GM12878 (cell line): ENCODE measurements at regions of chr13 and their contacts with region 1.

Region 1: DNA sequence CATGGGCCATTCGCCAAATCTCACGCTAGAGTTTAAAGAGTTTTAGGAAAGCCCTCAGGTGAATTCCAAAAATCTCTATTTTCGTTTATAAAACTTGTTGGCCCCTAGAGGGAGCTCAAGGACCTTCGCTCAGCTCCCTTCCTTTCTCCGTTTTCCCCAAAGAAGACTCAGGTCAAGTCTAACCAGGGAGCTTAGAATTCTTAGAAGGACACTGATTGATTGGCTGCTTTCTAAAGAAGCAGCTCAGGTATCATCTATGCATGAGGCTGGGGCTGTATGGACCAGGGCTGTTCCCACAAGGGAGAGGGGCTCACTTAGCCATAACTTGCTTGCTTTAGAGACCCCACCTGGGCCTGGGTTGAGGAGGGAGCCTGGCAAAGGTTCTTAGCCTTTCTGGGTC is 20.5 kb downstream of the DZIP1 start:
- DNase-seq: no peak
- ATAC-seq: peak; percentile 77
- H3K4me3 ChIP-seq: no peak overlapping the region
- H3K27ac ChIP-seq: no peak overlapping the region
- H3K4me1 ChIP-seq: no peaks in the 10 kb centered on the region
- H3K27me3 ChIP-seq: no peaks in the 10 kb centered on the region
- CTCF ChIP-seq: peak; percentile 66 to 79 (median 68)
- EP300 ChIP-seq: no peak
- POLR2A ChIP-seq: no peak
- RAD21 ChIP-seq: peak; percentile 90

Region 2: DNA sequence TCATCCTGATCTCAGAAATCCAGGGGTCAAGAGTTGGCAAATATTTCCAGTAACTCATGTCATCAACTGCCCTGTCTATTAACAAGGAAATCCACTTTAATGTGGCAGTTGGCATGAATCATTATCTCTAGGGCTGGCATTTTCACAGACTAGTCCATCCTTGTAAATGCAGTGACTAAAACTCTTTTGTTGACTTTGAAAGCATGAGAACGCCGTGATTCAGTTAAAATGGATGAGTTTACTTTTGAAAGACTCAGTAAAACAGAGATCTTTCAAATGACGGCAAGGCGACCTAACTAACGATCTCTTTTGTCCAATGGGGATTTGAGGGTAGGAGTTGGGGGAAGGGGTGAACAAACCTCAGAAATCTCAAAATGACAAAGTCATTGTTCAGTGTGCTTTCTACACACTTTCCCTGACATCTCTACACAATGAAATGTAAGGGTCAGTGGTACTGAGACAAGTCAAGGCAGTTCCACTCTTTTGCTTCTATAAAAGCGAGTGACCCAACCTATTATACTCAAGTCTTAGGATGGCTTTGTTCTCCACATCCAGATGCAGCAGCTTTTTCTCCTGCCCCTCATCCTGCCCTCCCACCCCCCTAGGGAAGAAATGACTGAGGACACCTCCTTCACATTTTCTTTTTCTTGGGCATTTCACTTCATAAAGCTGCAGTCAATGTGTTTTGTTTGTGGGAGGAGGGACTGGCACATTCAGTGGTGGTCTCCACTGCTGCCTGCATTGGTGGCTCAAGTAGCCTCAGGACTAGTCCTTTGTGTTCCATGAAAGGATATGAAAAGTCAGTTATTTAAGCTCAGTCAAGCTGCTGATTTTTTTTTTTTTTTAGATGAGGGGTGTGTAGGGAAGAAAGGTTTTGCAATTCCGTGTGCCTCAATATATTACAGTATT is 523.2 kb before region 1 on chr13:
- CTCF ChIA-PET with region 1: no interaction called
- POLR2A ChIA-PET with region 1: no interaction called
- RAD21 ChIA-PET with region 1: no interaction called
- SMC1A ChIA-PET with region 1: no interaction called
- in situ Hi-C with region 1: no loop called
- intact Hi-C with region 1: no loop called
- DNase-seq: peak; percentile 21
- ATAC-seq: peak; percentile 92
- H3K4me3 ChIP-seq: no peak overlapping the region
- H3K27ac ChIP-seq: no peak overlapping the region
- H3K4me1 ChIP-seq: no peaks in the 10 kb centered on the region
- H3K27me3 ChIP-seq: no peaks in the 10 kb centered on the region
- CTCF ChIP-seq: no peak
- EP300 ChIP-seq: peak; percentile 47 to 60; a peak in 2 of 4 replicates
- POLR2A ChIP-seq: no peak
- RAD21 ChIP-seq: no peak

Region 3: DNA sequence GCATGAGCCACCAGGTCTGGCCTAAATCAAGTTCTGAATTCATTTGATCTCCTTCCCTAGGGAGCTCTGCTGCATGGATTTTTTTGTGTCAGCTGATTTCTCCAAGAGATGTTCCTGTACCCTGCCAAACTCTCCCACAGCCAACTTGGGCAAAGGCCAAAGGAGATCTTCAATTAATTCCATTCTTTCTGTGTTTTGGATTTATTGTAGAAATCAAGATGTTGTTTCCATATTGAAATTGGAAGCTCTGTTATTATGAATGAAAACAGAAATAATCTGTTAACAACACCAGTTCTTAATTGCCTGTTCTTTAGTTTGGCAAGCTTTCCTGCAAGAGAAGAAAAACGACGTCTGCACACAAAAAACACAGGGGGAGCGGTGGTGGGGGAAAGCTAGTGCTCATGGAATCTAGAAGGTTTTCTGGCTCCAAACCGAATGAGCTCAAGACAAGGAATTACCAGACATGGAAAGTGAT is 236.2 kb before region 1 on chr13:
- CTCF ChIA-PET with region 1: no interaction called
- POLR2A ChIA-PET with region 1: no interaction called
- RAD21 ChIA-PET with region 1: no interaction called
- SMC1A ChIA-PET with region 1: no interaction called
- in situ Hi-C with region 1: no loop called
- intact Hi-C with region 1: no loop called
- DNase-seq: no peak
- ATAC-seq: no peak
- H3K4me3 ChIP-seq: peak overlapping the region; percentile 29; the same call in 1 of the 2 replicates
- H3K27ac ChIP-seq: peak overlapping the region; percentile 56
- H3K4me1 ChIP-seq: peaks cover 28% of the 10 kb centered on the region
- H3K27me3 ChIP-seq: no peaks in the 10 kb centered on the region
- CTCF ChIP-seq: no peak
- EP300 ChIP-seq: no peak
- POLR2A ChIP-seq: no peak
- RAD21 ChIP-seq: no peak

Region 4: GRCh38 chr13:95536632-95537241 is 87.3 kb before region 1 on chr13:
- CTCF ChIA-PET with region 1: interaction called, 12 read pairs
- POLR2A ChIA-PET with region 1: no interaction called
- RAD21 ChIA-PET with region 1: interaction called, 5 read pairs
- SMC1A ChIA-PET with region 1: interaction called, 9 read pairs
- in situ Hi-C with region 1: no loop called
- intact Hi-C with region 1: no loop called
- DNase-seq: no peak
- ATAC-seq: peak; percentile 34; the same call in 2 of the 3 replicates
- H3K4me3 ChIP-seq: no peak overlapping the region
- H3K27ac ChIP-seq: no peak overlapping the region
- H3K4me1 ChIP-seq: no peaks in the 10 kb centered on the region
- H3K27me3 ChIP-seq: no peaks in the 10 kb centered on the region
- CTCF ChIP-seq: peak; percentile 34 to 50 (median 47); a peak in 5 of 6 replicates
- EP300 ChIP-seq: no peak
- POLR2A ChIP-seq: no peak
- RAD21 ChIP-seq: peak; percentile 51

Region 5: DNA sequence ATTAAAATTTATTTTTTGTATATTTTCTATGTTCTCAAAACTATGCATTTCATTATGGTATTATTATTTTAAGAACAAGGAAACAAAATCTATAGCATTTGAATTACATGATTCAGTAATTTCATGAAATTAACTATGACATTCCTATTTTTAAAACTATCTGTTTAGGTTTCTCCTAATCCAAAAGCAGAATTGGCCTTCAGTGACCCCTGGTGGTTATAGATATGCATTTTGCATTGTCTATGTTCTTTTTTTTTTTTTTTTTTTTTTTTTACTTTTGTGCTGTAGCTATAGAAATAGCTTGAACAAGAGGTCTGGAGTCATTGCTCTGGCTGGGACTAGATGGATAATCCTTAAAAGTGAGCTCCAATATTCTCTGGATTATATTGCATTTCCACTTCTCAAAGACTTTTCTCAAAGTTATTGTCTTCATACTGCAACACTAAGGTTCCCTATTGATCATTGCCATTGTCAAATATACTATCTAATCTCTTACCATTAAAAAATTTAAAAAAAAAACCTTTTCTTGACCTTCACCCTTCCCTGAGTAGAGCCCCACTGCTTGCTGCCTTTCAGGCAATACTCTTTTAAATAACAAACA is 37.1 kb after region 1 on chr13:
- CTCF ChIA-PET with region 1: interaction called, 42 read pairs
- POLR2A ChIA-PET with region 1: no interaction called
- RAD21 ChIA-PET with region 1: interaction called, 12 read pairs
- SMC1A ChIA-PET with region 1: interaction called, 12 read pairs
- in situ Hi-C with region 1: no loop called
- intact Hi-C with region 1: loop called (anchors 1 kb)
- DNase-seq: no peak
- ATAC-seq: peak; percentile 53; the same call in 2 of the 3 replicates
- H3K4me3 ChIP-seq: no peak overlapping the region
- H3K27ac ChIP-seq: no peak overlapping the region
- H3K4me1 ChIP-seq: no peaks in the 10 kb centered on the region
- H3K27me3 ChIP-seq: no peaks in the 10 kb centered on the region
- CTCF ChIP-seq: peak; percentile 50 to 60 (median 54)
- EP300 ChIP-seq: no peak
- POLR2A ChIP-seq: no peak
- RAD21 ChIP-seq: peak; percentile 68

Region 6: GRCh38 chr13:95800436-95800835 is 176.4 kb after region 1 on chr13:
- CTCF ChIA-PET with region 1: no interaction called
- POLR2A ChIA-PET with region 1: no interaction called
- RAD21 ChIA-PET with region 1: no interaction called
- SMC1A ChIA-PET with region 1: no interaction called
- in situ Hi-C with region 1: no loop called
- intact Hi-C with region 1: no loop called
- DNase-seq: no peak
- ATAC-seq: no peak
- H3K4me3 ChIP-seq: no peak overlapping the region
- H3K27ac ChIP-seq: no peak overlapping the region
- H3K4me1 ChIP-seq: no peaks in the 10 kb centered on the region
- H3K27me3 ChIP-seq: no peaks in the 10 kb centered on the region
- CTCF ChIP-seq: no peak
- EP300 ChIP-seq: no peak
- POLR2A ChIP-seq: no peak
- RAD21 ChIP-seq: no peak

Region 7: GRCh38 chr13:95822303-95822702 is 198.3 kb after region 1 on chr13:
- CTCF ChIA-PET with region 1: interaction called, 11 read pairs
- POLR2A ChIA-PET with region 1: no interaction called
- RAD21 ChIA-PET with region 1: interaction called, 3 read pairs
- SMC1A ChIA-PET with region 1: interaction called, 3 read pairs
- in situ Hi-C with region 1: loop called (anchors 25 kb)
- intact Hi-C with region 1: no loop called
- DNase-seq: no peak
- ATAC-seq: no peak
- H3K4me3 ChIP-seq: no peak overlapping the region
- H3K27ac ChIP-seq: no peak overlapping the region
- H3K4me1 ChIP-seq: no peaks in the 10 kb centered on the region
- H3K27me3 ChIP-seq: no peaks in the 10 kb centered on the region
- CTCF ChIP-seq: no peak
- EP300 ChIP-seq: no peak
- POLR2A ChIP-seq: no peak
- RAD21 ChIP-seq: no peak

Region 8: DNA sequence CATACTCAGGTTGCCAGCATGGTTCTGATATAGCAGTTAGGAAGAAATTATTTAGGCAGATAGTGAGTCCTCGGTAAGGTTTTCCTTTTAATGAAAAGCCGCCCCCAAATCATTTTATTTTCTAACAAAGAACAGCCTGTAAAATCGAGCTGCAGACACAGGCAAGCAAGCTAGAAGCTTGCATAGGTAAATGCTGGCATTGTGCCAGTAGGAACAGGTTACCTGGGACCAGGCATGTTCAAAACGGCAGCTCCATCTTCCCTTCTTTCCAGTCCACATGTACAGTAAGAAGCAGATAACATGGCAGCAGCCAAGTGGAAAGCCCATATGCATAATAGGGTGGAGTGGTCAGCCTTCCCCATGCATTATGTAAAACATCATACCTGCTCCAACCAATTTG is 358.1 kb after region 1 on chr13:
- CTCF ChIA-PET with region 1: interaction called, 9 read pairs
- POLR2A ChIA-PET with region 1: no interaction called
- RAD21 ChIA-PET with region 1: interaction called, 4 read pairs
- SMC1A ChIA-PET with region 1: interaction called, 5 read pairs
- in situ Hi-C with region 1: loop called (anchors 5 kb)
- intact Hi-C with region 1: loop called (anchors 2 kb)
- DNase-seq: no peak
- ATAC-seq: no peak
- H3K4me3 ChIP-seq: no peak overlapping the region
- H3K27ac ChIP-seq: no peak overlapping the region
- H3K4me1 ChIP-seq: no peaks in the 10 kb centered on the region
- H3K27me3 ChIP-seq: no peaks in the 10 kb centered on the region
- CTCF ChIP-seq: no peak
- EP300 ChIP-seq: no peak
- POLR2A ChIP-seq: no peak
- RAD21 ChIP-seq: no peak

Region 9: GRCh38 chr13:96011291-96011872 is 387.4 kb after region 1 on chr13:
- CTCF ChIA-PET with region 1: no interaction called
- POLR2A ChIA-PET with region 1: no interaction called
- RAD21 ChIA-PET with region 1: no interaction called
- SMC1A ChIA-PET with region 1: no interaction called
- in situ Hi-C with region 1: no loop called
- intact Hi-C with region 1: no loop called
- DNase-seq: no peak
- ATAC-seq: no peak
- H3K4me3 ChIP-seq: no peak overlapping the region
- H3K27ac ChIP-seq: no peak overlapping the region
- H3K4me1 ChIP-seq: no peaks in the 10 kb centered on the region
- H3K27me3 ChIP-seq: no peaks in the 10 kb centered on the region
- CTCF ChIP-seq: no peak
- EP300 ChIP-seq: no peak
- POLR2A ChIP-seq: no peak
- RAD21 ChIP-seq: no peak